CD8-positive, alpha-beta T cell (primary cell): ENCODE measurements at regions of chr17 and their contacts with region 1.

Region 1: GRCh38 chr17:29617125-29617480 is 5.6 kb downstream of the CORO6 start:
- DNase-seq: peak; percentile 78 to 94 (median 90)
- ATAC-seq: peak; percentile 64
- H3K4me3 ChIP-seq: peak overlapping the region; percentile 75 to 82
- H3K4me3 Mint-ChIP-seq: peak overlapping the region; percentile 90
- H3K27ac ChIP-seq: peak overlapping the region in 1 of 2 experiments; percentile 58
- H3K27ac Mint-ChIP-seq: peak overlapping the region; percentile 49
- H3K4me1 ChIP-seq: peaks cover 57% of the 10 kb centered on the region
- H3K4me1 Mint-ChIP-seq: peaks cover 36% of the 10 kb centered on the region
- H3K27me3 ChIP-seq: no peaks in the 10 kb centered on the region
- H3K27me3 Mint-ChIP-seq: no peaks in the 10 kb centered on the region
- CTCF ChIP-seq: peak; percentile 81

Region 2: GRCh38 chr17:29252101-29252866 is 364.8 kb before region 1 on chr17:
- CTCF ChIA-PET with region 1: no interaction called
- POLR2A ChIA-PET with region 1: no interaction called
- intact Hi-C with region 1: no loop called
- DNase-seq: peak in 2 of 9 experiments; percentile 35 to 48
- ATAC-seq: no peak
- H3K4me3 ChIP-seq: no peak overlapping the region
- H3K4me3 Mint-ChIP-seq: no peak overlapping the region
- H3K27ac ChIP-seq: no peak overlapping the region
- H3K27ac Mint-ChIP-seq: no peak overlapping the region
- H3K4me1 ChIP-seq: no peaks in the 10 kb centered on the region
- H3K4me1 Mint-ChIP-seq: peaks cover 7% of the 10 kb centered on the region
- H3K27me3 ChIP-seq: no peaks in the 10 kb centered on the region
- H3K27me3 Mint-ChIP-seq: no peaks in the 10 kb centered on the region
- CTCF ChIP-seq: peak; percentile 63

Region 3: DNA sequence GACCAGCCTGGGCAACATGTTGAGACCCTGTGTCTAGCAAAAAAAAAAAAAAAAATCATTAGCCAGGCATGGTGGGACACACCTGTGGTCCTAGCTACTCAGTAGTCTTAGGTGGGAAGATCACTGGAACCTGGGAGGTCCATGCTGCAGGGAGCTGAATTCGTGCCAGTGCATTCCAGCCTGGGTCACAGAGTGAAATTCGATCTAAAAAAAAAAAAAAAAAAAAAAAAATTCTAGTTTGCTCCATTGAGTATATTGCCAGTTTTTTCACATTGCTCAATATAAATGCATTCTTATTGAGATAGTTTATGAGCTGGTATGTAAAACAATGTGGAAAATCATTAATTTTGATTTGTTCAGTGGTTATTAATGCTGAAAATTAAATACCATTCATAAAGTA is 102.3 kb before region 1 on chr17:
- CTCF ChIA-PET with region 1: no interaction called
- POLR2A ChIA-PET with region 1: no interaction called
- intact Hi-C with region 1: no loop called
- DNase-seq: no peak
- ATAC-seq: no peak
- H3K4me3 ChIP-seq: no peak overlapping the region
- H3K4me3 Mint-ChIP-seq: no peak overlapping the region
- H3K27ac ChIP-seq: no peak overlapping the region
- H3K27ac Mint-ChIP-seq: no peak overlapping the region
- H3K4me1 ChIP-seq: no peaks in the 10 kb centered on the region
- H3K4me1 Mint-ChIP-seq: no peaks in the 10 kb centered on the region
- H3K27me3 ChIP-seq: no peaks in the 10 kb centered on the region
- H3K27me3 Mint-ChIP-seq: no peaks in the 10 kb centered on the region
- CTCF ChIP-seq: no peak

Region 4: GRCh38 chr17:29568331-29569244 is 48.5 kb before region 1 on chr17 and contains the start of gene TP53I13:
- CTCF ChIA-PET with region 1: interaction called, 25 read pairs
- POLR2A ChIA-PET with region 1: interaction called, 57 read pairs
- intact Hi-C with region 1: loop called (anchors 2 to 5 kb)
- DNase-seq: peak; percentile 71 to 95 (median 91)
- ATAC-seq: peak; percentile 57
- H3K4me3 ChIP-seq: peak within 1 kb of the TSS; percentile 66 to 94
- H3K4me3 Mint-ChIP-seq: peak within 1 kb of the TSS; percentile 94
- H3K27ac ChIP-seq: peak within 1 kb of the TSS; percentile 53 to 78
- H3K27ac Mint-ChIP-seq: peak within 1 kb of the TSS; percentile 86
- H3K4me1 ChIP-seq: peaks cover 30% of the 10 kb centered on the region
- H3K4me1 Mint-ChIP-seq: peaks cover 41% of the 10 kb centered on the region
- H3K27me3 ChIP-seq: no peaks in the 10 kb centered on the region
- H3K27me3 Mint-ChIP-seq: no peaks in the 10 kb centered on the region
- CTCF ChIP-seq: no peak
- total RNA-seq, gene TP53I13: 50.2 to 54.1 TPM

Region 5: DNA sequence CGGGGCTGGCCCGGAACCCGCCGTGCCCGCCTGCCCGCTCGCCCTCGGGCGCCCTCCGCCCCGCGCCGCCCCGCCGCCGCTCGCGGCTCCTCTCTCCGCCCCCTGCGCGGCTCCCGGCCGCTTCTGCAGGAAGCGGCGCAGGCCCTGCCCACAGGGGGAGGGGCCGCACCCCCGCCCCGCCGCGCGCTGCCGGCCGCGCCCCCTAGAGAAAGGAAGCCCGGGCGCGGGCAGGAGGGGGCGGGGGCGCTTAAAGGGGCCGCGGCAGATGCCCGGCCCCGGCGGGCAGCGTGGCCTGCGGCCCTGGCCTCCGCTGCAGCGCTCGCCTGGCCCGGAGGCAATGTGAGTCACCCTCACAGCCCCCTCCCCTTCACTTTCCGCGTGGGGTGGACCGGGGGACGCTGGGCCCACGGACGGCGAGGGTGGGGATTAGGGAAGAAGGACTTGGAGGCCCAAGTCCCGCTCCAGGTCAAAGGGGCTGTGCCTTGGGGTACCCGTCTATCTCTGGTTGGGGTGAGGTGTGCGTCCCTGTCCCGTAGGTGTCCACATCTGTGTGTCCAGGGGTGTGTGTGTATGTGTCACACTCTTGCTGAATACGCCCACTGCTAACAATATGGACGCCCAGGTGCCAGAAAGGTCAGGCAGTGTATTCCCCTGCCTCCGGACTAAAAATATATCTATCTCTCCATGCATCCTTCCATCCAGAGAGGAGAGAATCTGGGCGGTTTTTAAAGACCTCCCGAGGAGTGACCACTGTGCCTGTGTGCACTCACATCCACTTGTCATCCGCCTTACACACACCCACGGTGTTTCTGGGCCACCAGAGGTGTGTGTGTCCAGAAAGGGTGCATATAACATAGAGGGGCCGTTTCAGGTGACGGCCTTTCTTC is 27.3 kb before region 1 on chr17 and contains the start of gene GIT1:
- CTCF ChIA-PET with region 1: interaction called, 216 read pairs
- POLR2A ChIA-PET with region 1: interaction called, 63 read pairs
- intact Hi-C with region 1: loop called (anchors 1 kb)
- DNase-seq: peak; percentile 59 to 93 (median 83)
- ATAC-seq: peak; percentile 86
- H3K4me3 ChIP-seq: peak within 1 kb of the TSS; percentile 73 to 75
- H3K4me3 Mint-ChIP-seq: peak within 1 kb of the TSS; percentile 93
- H3K27ac ChIP-seq: peak within 1 kb of the TSS; percentile 18 to 64
- H3K27ac Mint-ChIP-seq: peak within 1 kb of the TSS; percentile 89
- H3K4me1 ChIP-seq: peaks cover 78% of the 10 kb centered on the region
- H3K4me1 Mint-ChIP-seq: peaks cover 59% of the 10 kb centered on the region
- H3K27me3 ChIP-seq: no peaks in the 10 kb centered on the region
- H3K27me3 Mint-ChIP-seq: no peaks in the 10 kb centered on the region
- CTCF ChIP-seq: no peak
- total RNA-seq, gene GIT1: 25.8 to 27.0 TPM

Region 6: GRCh38 chr17:29628644-29629043 is 11.5 kb after region 1 on chr17:
- CTCF ChIA-PET with region 1: interaction called, 25 read pairs
- POLR2A ChIA-PET with region 1: no interaction called
- intact Hi-C with region 1: no loop called
- DNase-seq: no peak
- ATAC-seq: no peak
- H3K4me3 ChIP-seq: no peak overlapping the region
- H3K4me3 Mint-ChIP-seq: no peak overlapping the region
- H3K27ac ChIP-seq: no peak overlapping the region
- H3K27ac Mint-ChIP-seq: peak overlapping the region; percentile 75
- H3K4me1 ChIP-seq: peaks cover 7% of the 10 kb centered on the region
- H3K4me1 Mint-ChIP-seq: peaks cover 22% of the 10 kb centered on the region
- H3K27me3 ChIP-seq: no peaks in the 10 kb centered on the region
- H3K27me3 Mint-ChIP-seq: no peaks in the 10 kb centered on the region
- CTCF ChIP-seq: no peak

Region 7: GRCh38 chr17:29705386-29705785 is 88.3 kb after region 1 on chr17:
- CTCF ChIA-PET with region 1: interaction called, 4 read pairs
- POLR2A ChIA-PET with region 1: interaction called, 3 read pairs
- intact Hi-C with region 1: loop called in 1 of 2 experiments (anchors 1 kb)
- DNase-seq: peak in 2 of 9 experiments; percentile 29 to 58
- ATAC-seq: peak; percentile 16
- H3K4me3 ChIP-seq: peak overlapping the region; percentile 1 to 9
- H3K4me3 Mint-ChIP-seq: peak overlapping the region; percentile 66
- H3K27ac ChIP-seq: peak overlapping the region; percentile 62 to 91
- H3K27ac Mint-ChIP-seq: peak overlapping the region; percentile 99
- H3K4me1 ChIP-seq: peaks cover 37% of the 10 kb centered on the region
- H3K4me1 Mint-ChIP-seq: peaks cover 58% of the 10 kb centered on the region
- H3K27me3 ChIP-seq: no peaks in the 10 kb centered on the region
- H3K27me3 Mint-ChIP-seq: no peaks in the 10 kb centered on the region
- CTCF ChIP-seq: no peak

Region 8: DNA sequence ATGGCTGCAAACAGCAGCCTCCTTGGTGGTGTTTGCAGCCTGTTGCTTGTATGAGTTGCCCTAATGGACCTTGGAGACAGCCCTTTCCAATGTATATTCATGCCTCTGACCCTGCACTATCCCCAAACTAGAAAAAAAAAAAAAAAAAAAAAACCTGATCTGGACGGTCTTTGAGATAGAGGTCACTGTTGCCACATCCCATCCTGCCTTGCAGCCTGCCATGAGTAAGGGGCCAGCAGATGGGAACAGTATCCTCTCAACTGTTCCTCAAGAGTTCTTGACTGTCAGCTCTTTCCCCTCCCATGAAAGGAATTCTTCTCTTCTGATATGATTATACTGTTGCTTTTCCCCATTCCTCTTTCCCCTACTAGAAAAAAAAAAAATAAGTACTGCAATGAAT is 160.6 kb after region 1 on chr17:
- CTCF ChIA-PET with region 1: interaction called, 29 read pairs
- POLR2A ChIA-PET with region 1: interaction called, 11 read pairs
- intact Hi-C with region 1: loop called in 1 of 2 experiments (anchors 1 kb)
- DNase-seq: no peak
- ATAC-seq: no peak
- H3K4me3 ChIP-seq: no peak overlapping the region
- H3K4me3 Mint-ChIP-seq: no peak overlapping the region
- H3K27ac ChIP-seq: no peak overlapping the region
- H3K27ac Mint-ChIP-seq: no peak overlapping the region
- H3K4me1 ChIP-seq: peaks cover 7% of the 10 kb centered on the region
- H3K4me1 Mint-ChIP-seq: peaks cover 7% of the 10 kb centered on the region
- H3K27me3 ChIP-seq: no peaks in the 10 kb centered on the region
- H3K27me3 Mint-ChIP-seq: no peaks in the 10 kb centered on the region
- CTCF ChIP-seq: no peak

Region 9: DNA sequence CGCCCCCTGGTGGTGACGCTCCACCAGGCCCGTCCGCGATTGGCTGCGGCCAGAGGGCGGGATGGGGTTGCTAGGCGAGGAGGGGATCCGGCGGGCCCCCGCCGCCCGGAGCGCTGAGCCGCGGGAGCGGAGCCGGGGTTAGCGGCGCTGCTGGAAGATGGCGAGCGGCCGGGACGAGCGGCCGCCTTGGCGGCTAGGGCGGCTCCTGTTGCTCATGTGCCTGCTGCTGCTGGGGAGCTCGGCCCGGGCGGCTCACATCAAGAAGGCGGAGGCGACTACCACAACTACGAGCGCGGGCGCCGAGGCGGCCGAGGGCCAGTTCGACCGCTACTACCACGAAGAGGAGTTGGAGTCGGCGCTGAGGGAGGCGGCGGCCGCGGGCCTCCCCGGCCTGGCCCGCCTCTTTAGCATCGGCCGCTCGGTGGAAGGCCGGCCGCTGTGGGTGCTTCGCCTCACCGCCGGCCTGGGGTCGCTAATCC is 761.8 kb after region 1 on chr17 and contains the start of gene CPD:
- CTCF ChIA-PET with region 1: no interaction called
- POLR2A ChIA-PET with region 1: no interaction called
- intact Hi-C with region 1: loop called in 1 of 2 experiments (anchors 1 kb)
- DNase-seq: peak; percentile 92 to 99 (median 98)
- ATAC-seq: peak; percentile 93
- H3K4me3 ChIP-seq: peak within 1 kb of the TSS; percentile 51 to 76
- H3K4me3 Mint-ChIP-seq: peak within 1 kb of the TSS; percentile 88
- H3K27ac ChIP-seq: peak within 1 kb of the TSS; percentile 65 to 94
- H3K27ac Mint-ChIP-seq: peak within 1 kb of the TSS; percentile 93
- H3K4me1 ChIP-seq: peaks cover 53% of the 10 kb centered on the region
- H3K4me1 Mint-ChIP-seq: peaks cover 56% of the 10 kb centered on the region
- H3K27me3 ChIP-seq: no peaks in the 10 kb centered on the region
- H3K27me3 Mint-ChIP-seq: no peaks in the 10 kb centered on the region
- CTCF ChIP-seq: no peak
- total RNA-seq, gene CPD: 40.9 to 42.1 TPM